ENCODE measurements at regions of chr5 and their contacts with region 1.

Region 1: GRCh38 chr5:132426525-132427138 is 57.1 kb downstream of the SLC22A5 start:
- DNase-seq: peak; percentile 76
- ATAC-seq: peak; percentile 60
- H3K4me3 Mint-ChIP-seq: peak overlapping the region; percentile 85
- H3K27ac Mint-ChIP-seq: peak overlapping the region; percentile 95
- H3K4me1 Mint-ChIP-seq: peaks cover 88% of the 10 kb centered on the region
- H3K27me3 Mint-ChIP-seq: no peaks in the 10 kb centered on the region

Region 2: GRCh38 chr5:132369474-132370180 is 57.0 kb before region 1 on chr5 and contains the start of gene SLC22A5:
- POLR2A ChIA-PET with region 1: no interaction called
- DNase-seq: peak; percentile 88
- ATAC-seq: peak; percentile 96
- H3K4me3 Mint-ChIP-seq: peak within 1 kb of the TSS; percentile 83
- H3K27ac Mint-ChIP-seq: peak within 1 kb of the TSS; percentile 71
- H3K4me1 Mint-ChIP-seq: peaks cover 17% of the 10 kb centered on the region
- H3K27me3 Mint-ChIP-seq: no peaks in the 10 kb centered on the region
- total RNA-seq, gene SLC22A5: 5.1 to 6.0 TPM

Region 3: DNA sequence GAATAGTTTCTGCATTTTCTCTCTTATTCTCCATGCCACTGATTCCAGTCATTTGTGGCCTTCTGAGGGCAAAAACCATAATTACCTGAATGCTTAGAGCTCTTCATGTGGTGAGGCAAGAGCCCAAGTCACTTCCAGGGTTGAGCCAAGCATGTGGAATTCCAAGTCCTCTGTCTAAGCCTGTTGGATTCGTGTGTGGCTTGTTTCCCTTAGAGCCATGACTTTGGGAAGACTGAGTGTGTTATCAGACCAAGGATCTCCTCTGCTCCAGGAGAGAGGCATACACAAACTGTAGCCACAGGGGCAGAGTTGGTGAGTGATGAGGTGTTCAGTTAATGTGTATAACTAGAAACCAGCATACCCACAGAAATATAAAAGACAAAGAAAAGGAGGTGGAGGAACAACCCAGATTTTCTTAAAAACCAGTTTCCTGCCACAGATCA is 30.0 kb before region 1 on chr5:
- POLR2A ChIA-PET with region 1: no interaction called
- DNase-seq: no peak
- ATAC-seq: peak; percentile 77
- H3K4me3 Mint-ChIP-seq: peak overlapping the region; percentile 45
- H3K27ac Mint-ChIP-seq: peak overlapping the region; percentile 49
- H3K4me1 Mint-ChIP-seq: peaks cover 64% of the 10 kb centered on the region
- H3K27me3 Mint-ChIP-seq: peaks cover 7% of the 10 kb centered on the region

Region 4: GRCh38 chr5:132456296-132457001 is 29.8 kb after region 1 on chr5:
- POLR2A ChIA-PET with region 1: interaction called, 188 read pairs
- DNase-seq: peak; percentile 68
- ATAC-seq: peak; percentile 48
- H3K4me3 Mint-ChIP-seq: peak overlapping the region; percentile 66
- H3K27ac Mint-ChIP-seq: peak overlapping the region; percentile 99
- H3K4me1 Mint-ChIP-seq: peaks cover 77% of the 10 kb centered on the region
- H3K27me3 Mint-ChIP-seq: no peaks in the 10 kb centered on the region

Region 5: DNA sequence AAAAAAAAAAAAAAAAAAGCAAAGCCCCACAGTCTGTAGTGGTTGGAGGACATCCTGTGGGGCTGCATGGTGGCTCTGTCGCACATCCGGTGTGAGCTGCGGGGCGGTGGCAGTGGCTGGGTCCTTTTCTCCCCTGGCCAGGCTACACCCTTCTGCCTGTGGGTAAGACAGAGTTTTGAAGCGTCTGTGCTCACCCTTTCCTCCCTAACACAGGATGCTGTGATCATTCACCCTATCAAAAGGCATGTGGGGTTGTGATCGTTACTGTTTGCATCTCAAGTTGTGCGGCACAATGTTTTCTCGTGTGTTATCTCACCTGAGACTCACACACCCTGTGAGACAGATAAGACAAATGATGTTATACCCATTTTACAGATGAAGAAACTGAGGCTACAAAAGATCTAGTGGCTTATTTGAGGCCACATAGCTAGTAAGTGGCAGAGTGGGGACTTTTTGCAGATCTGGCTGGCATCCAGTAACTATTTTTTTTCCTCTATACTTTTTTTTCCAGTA is 46.4 kb after region 1 on chr5:
- POLR2A ChIA-PET with region 1: interaction called, 162 read pairs
- DNase-seq: peak; percentile 84
- ATAC-seq: peak; percentile 97
- H3K4me3 Mint-ChIP-seq: peak overlapping the region; percentile 55
- H3K27ac Mint-ChIP-seq: peak overlapping the region; percentile 88
- H3K4me1 Mint-ChIP-seq: peaks cover 73% of the 10 kb centered on the region
- H3K27me3 Mint-ChIP-seq: no peaks in the 10 kb centered on the region

Region 6: DNA sequence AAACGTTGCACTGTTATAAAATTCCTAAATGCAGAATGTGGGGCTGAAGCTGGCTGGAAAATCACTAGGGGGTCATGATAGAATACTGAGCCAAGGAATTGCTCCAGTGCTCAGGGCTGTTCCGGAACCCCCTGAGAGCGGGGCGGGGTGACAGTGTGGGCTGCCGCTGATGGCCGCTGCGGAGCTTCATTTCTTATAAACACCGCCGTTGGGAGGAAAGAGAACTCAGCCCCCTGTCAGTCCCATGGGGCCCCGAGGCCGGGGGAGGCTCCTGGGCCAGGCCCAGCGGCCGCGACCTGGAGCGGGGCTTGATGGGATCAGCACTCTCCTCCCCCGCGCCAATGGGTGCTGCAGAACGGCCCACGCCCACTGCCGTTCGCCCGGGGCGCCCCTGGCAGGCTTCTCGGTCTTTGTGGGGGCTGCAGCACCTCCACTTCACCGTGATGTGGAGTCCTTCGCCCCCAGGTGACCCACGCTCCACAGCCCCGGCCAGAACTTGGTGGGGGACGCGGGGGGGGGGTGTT is 69.1 kb after region 1 on chr5:
- POLR2A ChIA-PET with region 1: interaction called, 211 read pairs
- DNase-seq: peak; percentile 82
- ATAC-seq: peak; percentile 57
- H3K4me3 Mint-ChIP-seq: peak overlapping the region; percentile 87
- H3K27ac Mint-ChIP-seq: peak overlapping the region; percentile 99
- H3K4me1 Mint-ChIP-seq: peaks cover 61% of the 10 kb centered on the region
- H3K27me3 Mint-ChIP-seq: no peaks in the 10 kb centered on the region

Measured in activated naive CD8-positive, alpha-beta T cell treated with anti-CD3 and anti-CD28 coated beads, Interleukin-2, amount 10 ng/mL, durations not matched to agents 7 days and 5 days (primary cell).